MCF 10A (cell line): ENCODE measurements at regions of chr6 and their contacts with region 1.

Region 1: GRCh38 chr6:161370880-161371279 is 97.0 kb upstream of the AGPAT4 start:
- DNase-seq: peak; percentile 77
- H3K4me3 Mint-ChIP-seq: no peak overlapping the region
- H3K27ac Mint-ChIP-seq: no peak overlapping the region
- H3K4me1 Mint-ChIP-seq: peaks cover 13% of the 10 kb centered on the region
- H3K27me3 Mint-ChIP-seq: no peaks in the 10 kb centered on the region
- CTCF ChIP-seq: peak; percentile 95

Region 2: GRCh38 chr6:160750276-160750689 is 620.6 kb before region 1 on chr6:
- CTCF ChIA-PET with region 1: interaction called, 72 read pairs
- POLR2A ChIA-PET with region 1: no interaction called
- intact Hi-C with region 1: loop called (anchors 1 kb)
- DNase-seq: peak; percentile 45
- H3K4me3 Mint-ChIP-seq: no peak overlapping the region
- H3K27ac Mint-ChIP-seq: no peak overlapping the region
- H3K4me1 Mint-ChIP-seq: no peaks in the 10 kb centered on the region
- H3K27me3 Mint-ChIP-seq: no peaks in the 10 kb centered on the region
- CTCF ChIP-seq: peak; percentile 70

Region 3: GRCh38 chr6:160992061-160992979 is 378.6 kb before region 1 on chr6:
- CTCF ChIA-PET with region 1: interaction called, 19 read pairs
- POLR2A ChIA-PET with region 1: interaction called, 4 read pairs
- intact Hi-C with region 1: loop called (anchors 2 kb)
- DNase-seq: peak; percentile 78
- H3K4me3 Mint-ChIP-seq: peak overlapping the region; percentile 91
- H3K27ac Mint-ChIP-seq: peak overlapping the region; percentile 87
- H3K4me1 Mint-ChIP-seq: peaks cover 9% of the 10 kb centered on the region
- H3K27me3 Mint-ChIP-seq: no peaks in the 10 kb centered on the region
- CTCF ChIP-seq: peak; percentile 40

Region 4: DNA sequence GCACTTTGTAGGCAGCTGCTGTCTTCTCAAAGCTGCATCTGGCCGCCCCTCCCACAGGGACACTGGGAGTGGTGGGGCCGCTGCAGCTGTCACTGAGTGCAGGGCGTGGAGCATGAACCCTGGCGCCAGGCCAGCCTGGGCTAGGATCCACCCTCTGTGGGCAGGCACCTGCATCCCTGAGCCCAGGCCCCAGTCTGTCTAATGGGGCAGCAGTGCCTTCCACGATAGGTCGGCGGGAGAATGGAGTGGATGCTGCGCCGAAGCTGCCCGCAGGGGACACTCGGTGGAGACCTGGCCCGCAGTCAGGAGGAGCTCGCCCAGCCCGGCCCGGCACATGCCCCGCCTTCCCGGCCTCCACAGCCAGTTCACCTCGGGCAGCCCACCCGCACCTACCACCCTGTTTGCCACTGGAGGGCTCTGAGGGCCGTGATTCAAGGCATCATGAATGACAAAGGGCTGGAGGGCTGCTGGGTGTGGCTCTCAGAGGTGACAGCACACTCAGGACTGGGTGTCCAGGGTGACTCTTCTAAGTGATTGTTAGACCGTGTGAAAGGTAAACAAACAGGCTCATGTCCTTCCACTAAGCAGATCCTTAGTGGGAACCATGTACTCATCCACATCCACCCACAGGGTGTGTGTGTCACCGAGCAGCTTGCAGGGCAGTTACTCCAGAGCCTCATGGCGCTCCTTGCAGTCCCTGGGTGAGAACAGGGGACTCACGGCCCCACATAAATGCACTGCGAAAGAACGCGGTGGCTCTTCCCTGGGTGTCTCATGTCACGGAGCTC is 230.9 kb before region 1 on chr6:
- CTCF ChIA-PET with region 1: interaction called, 30 read pairs
- POLR2A ChIA-PET with region 1: interaction called, 3 read pairs
- intact Hi-C with region 1: loop called (anchors 1 kb)
- DNase-seq: peak; percentile 55
- H3K4me3 Mint-ChIP-seq: no peak overlapping the region
- H3K27ac Mint-ChIP-seq: no peak overlapping the region
- H3K4me1 Mint-ChIP-seq: no peaks in the 10 kb centered on the region
- H3K27me3 Mint-ChIP-seq: no peaks in the 10 kb centered on the region
- CTCF ChIP-seq: peak; percentile 36

Region 5: DNA sequence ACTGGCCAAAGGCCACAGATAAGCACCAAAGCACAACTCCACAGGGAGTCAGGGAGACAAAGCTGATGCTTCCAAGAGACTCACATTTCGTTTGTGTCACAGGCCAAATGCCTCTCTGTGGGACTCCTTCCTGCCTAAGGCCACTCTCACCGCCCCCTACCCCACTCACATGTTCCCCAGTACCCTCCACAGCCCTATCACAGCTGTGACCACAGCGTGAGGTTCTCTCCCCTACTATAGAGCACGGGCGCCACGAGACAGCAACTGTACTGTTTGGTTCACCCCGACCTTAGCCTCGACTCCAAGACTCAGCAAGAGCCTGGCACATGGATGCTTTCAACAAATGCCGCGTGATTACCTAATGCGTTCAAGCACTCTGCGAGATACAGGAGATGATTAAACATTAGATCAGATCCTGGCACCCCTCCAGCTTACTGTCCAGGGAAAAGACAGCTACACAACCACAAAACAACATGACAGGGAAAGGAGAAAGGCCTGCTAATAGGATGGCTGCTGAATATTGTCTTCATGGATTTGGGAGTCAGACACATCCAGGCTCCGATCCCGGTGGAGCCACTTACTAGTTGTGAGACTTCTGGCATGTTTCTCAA is 202.5 kb before region 1 on chr6:
- CTCF ChIA-PET with region 1: interaction called, 21 read pairs
- POLR2A ChIA-PET with region 1: interaction called, 4 read pairs
- intact Hi-C with region 1: loop called (anchors 1 kb)
- DNase-seq: peak; percentile 99
- H3K4me3 Mint-ChIP-seq: no peak overlapping the region
- H3K27ac Mint-ChIP-seq: peak overlapping the region; percentile 74
- H3K4me1 Mint-ChIP-seq: peaks cover 30% of the 10 kb centered on the region
- H3K27me3 Mint-ChIP-seq: no peaks in the 10 kb centered on the region
- CTCF ChIP-seq: no peak